Mammary epithelial cell (primary cell): ENCODE measurements at regions of chr18 and their contacts with region 1.

Region 1: DNA sequence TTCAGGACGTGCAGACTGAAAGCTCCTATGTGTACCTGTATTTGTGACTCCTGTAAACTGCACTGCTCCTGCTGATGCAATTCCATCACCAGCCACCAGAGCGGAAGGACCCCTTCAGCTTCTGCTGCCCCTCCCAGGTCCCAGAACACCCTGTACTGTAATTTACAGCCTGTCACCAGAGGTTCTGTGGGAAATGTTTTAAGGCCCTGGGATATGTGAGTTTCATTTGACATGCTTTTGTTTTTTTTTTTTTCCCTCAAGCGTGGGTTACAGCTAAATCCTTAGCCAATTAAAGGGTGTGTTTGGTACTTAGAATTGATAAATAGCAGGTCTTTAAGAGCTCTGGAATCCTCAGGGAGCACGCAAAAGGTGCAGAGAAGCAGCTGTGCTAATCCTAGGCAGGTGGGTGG is 79.4 kb downstream of the KCTD1 start:
- DNase-seq: no peak
- H3K4me3 ChIP-seq: no peak overlapping the region
- H3K27ac ChIP-seq: no peak overlapping the region
- H3K4me1 ChIP-seq: no peaks in the 10 kb centered on the region
- H3K27me3 ChIP-seq: no peaks in the 10 kb centered on the region
- CTCF ChIP-seq: peak; percentile 46 to 63

Region 2: GRCh38 chr18:26207937-26208336 is 261.0 kb before region 1 on chr18:
- CTCF ChIA-PET with region 1: no interaction called
- dilution Hi-C with region 1: no loop called
- in situ Hi-C with region 1: no loop called
- intact Hi-C with region 1: no loop called
- DNase-seq: no peak
- H3K4me3 ChIP-seq: no peak overlapping the region
- H3K27ac ChIP-seq: no peak overlapping the region
- H3K4me1 ChIP-seq: no peaks in the 10 kb centered on the region
- H3K27me3 ChIP-seq: no peaks in the 10 kb centered on the region
- CTCF ChIP-seq: no peak

Region 3: DNA sequence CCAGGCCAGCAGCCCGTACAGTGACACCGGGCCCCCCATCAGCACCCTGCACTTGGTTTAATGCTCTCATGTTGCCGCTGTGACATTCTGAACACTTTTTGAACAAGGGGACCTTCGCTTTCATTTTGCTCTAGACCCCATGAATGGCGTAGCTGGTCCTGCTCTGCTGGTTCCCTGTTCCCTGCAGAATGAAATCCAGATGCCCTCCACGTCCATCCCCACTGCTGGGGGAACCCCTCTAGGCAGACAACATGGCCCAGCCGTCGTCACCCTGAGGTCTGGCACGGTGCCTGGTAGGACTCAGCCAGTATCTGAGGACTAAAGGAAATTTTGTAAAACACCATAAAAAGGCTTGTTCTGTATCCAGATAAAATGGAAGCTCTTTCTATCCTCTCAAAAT is 49.2 kb before region 1 on chr18:
- CTCF ChIA-PET with region 1: no interaction called
- dilution Hi-C with region 1: no loop called
- in situ Hi-C with region 1: no loop called
- intact Hi-C with region 1: loop called (anchors 5 kb)
- DNase-seq: no peak
- H3K4me3 ChIP-seq: no peak overlapping the region
- H3K27ac ChIP-seq: no peak overlapping the region
- H3K4me1 ChIP-seq: peaks cover 5% of the 10 kb centered on the region
- H3K27me3 ChIP-seq: no peaks in the 10 kb centered on the region
- CTCF ChIP-seq: no peak